Gastrocnemius medialis (tissue), 4 donors: ENCODE measurements at regions of chr2 and their contacts with region 1.

Region 1: DNA sequence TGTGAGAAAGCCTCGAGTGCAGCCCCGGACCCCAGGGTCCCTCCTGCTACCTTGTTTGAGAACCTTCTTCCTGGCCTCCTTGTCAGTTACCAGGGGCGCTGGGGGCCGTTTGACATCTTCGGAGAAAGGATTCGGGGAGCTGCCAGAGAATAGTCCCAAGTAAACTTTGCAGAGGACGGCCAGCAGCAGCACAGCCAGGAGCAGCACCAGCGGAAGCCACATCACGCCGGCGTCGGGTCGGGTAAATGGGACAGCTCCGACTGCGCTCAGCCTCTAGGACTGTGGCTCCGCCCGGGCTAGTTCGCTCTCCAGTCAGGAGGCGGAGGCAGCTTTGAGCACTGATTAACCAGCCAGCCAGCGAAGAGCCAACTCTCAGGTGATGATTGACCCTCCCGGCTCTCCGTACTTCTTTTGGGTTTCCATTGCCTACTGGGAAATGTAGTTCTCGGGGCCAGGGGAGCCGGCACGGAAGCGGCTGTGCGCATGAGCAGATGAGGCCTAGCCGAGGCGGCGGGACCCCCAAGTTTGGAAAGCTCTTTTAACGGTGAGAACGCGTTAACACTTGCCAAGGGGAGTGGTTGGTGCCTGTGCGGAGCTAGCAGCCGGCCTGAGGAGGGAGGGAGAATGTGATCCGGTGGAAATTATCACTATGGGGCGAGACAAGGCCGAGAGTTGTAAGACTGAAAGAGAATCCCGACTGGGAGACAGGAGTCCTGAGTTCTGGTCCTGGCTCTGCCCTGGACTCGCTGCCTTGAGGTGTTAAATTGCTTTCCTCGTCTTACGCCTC is at the starts of genes ELMOD3 and RETSAT:
- DNase-seq: peak; percentile 99
- ATAC-seq: peak; percentile 90 to 94
- H3K4me3 ChIP-seq: peak within 1 kb of the TSS; percentile 70 to 97 (median 83)
- H3K27ac ChIP-seq: peak within 1 kb of the TSS; percentile 93 to 96 (median 96)
- H3K4me1 ChIP-seq: peaks cover 39 to 44% of the 10 kb centered on the region in 2 donors
- H3K27me3 ChIP-seq: no peaks in the 10 kb centered on the region
- CTCF ChIP-seq: no peak
- POLR2A ChIP-seq: peak; percentile 97
- total RNA-seq, gene ELMOD3: 15.9 to 31.7 (median 25.0) TPM
- total RNA-seq, gene RETSAT: 62.2 to 151 (median 116) TPM

Region 2: DNA sequence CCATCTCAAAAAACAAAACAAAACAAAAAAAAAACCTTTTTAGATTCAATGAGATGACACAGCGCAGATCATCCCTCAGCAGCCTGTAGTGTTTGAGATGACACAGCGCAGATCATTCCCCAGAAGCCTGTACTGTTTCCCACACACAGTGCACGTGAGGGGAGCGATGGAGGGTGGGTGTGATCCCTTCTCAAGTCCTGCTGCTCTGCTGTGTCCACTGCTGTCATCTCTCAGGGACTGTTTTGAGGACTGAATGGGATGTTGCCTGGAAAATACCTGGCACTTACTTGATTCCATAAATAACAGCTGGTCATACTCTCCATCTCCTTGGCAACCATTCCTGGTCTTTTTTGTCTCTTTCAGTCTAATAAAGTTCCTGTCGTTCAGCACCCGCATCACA is 52.4 kb before region 1 on chr2:
- in situ Hi-C with region 1: no loop called
- intact Hi-C with region 1: no loop called
- DNase-seq: no peak
- ATAC-seq: no peak
- H3K4me3 ChIP-seq: no peak overlapping the region
- H3K27ac ChIP-seq: no peak overlapping the region
- H3K4me1 ChIP-seq: peaks cover 4 to 6% of the 10 kb centered on the region in 2 donors
- H3K27me3 ChIP-seq: no peaks in the 10 kb centered on the region
- CTCF ChIP-seq: no peak
- POLR2A ChIP-seq: no peak

Region 3: GRCh38 chr2:85327822-85328617 is 26.5 kb before region 1 on chr2 and contains the start of gene TGOLN2:
- in situ Hi-C with region 1: no loop called
- intact Hi-C with region 1: loop called (anchors 1 kb)
- DNase-seq: peak; percentile 80 to 87
- ATAC-seq: peak; percentile 96
- H3K4me3 ChIP-seq: peak within 1 kb of the TSS; percentile 74 to 99 (median 81)
- H3K27ac ChIP-seq: peak within 1 kb of the TSS; percentile 90 to 98 (median 94)
- H3K4me1 ChIP-seq: peaks cover 32 to 34% of the 10 kb centered on the region in 2 donors
- H3K27me3 ChIP-seq: no peaks in the 10 kb centered on the region
- CTCF ChIP-seq: peak in 2 of 5 experiments; percentile 21 to 25
- POLR2A ChIP-seq: peak; percentile 96 to 99
- total RNA-seq, gene TGOLN2: 29.5 to 81.7 (median 61.9) TPM

Region 4: GRCh38 chr2:85383850-85384249 is 29.4 kb after region 1 on chr2:
- in situ Hi-C with region 1: no loop called
- intact Hi-C with region 1: loop called (anchors 2 kb)
- DNase-seq: no peak
- ATAC-seq: no peak
- H3K4me3 ChIP-seq: no peak overlapping the region
- H3K27ac ChIP-seq: peak overlapping the region; percentile 71 to 83 (median 77)
- H3K4me1 ChIP-seq: peaks cover 3 to 12% of the 10 kb centered on the region in 2 donors
- H3K27me3 ChIP-seq: no peaks in the 10 kb centered on the region
- CTCF ChIP-seq: no peak
- POLR2A ChIP-seq: no peak

Region 5: DNA sequence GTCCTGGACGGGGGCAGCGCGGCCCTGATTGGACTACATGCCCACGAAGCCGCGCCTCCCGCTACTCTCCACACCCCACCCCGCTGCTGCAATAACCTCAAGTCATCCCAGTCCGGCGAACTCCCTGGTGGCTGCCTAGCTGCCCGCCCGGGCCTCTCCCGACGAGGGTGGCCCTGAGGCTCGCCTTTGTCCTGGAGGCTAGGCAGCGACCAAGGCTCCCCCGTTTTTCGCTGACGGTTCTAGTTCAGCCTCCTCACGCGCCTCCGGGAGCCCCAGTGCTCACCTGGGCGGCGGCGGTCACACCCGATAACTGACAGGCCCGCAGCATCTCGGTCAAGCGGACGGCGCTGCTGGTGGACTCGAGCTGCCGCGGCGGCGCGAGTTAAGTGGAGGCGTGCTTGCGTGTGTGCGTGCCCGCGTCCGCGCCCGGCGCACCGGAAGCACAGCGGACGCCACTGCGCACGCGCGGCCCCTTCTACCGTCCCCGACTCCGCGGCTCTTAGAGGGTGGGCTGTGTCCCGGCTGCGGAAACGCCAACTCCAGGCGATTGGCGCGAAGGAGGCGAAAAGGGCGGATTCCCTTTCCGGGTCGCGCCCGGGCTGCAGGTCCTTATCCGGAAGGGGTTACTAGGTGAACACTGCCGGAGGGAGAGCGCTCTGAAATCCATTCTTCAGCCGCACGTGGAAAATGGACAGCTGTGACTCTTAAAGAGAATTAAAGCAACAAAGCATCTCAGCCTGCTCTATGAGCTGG is 840.8 kb after region 1 on chr2 and contains the start of gene IMMT:
- in situ Hi-C with region 1: loop called in 1 of 4 experiments (anchors 25 kb)
- intact Hi-C with region 1: no loop called
- DNase-seq: peak; percentile 93 to 95
- ATAC-seq: peak; percentile 79 to 85
- H3K4me3 ChIP-seq: peak within 1 kb of the TSS; percentile 80 to 99 (median 88)
- H3K27ac ChIP-seq: peak within 1 kb of the TSS; percentile 95 to 100 (median 98)
- H3K4me1 ChIP-seq: peaks cover 51 to 54% of the 10 kb centered on the region in 2 donors
- H3K27me3 ChIP-seq: no peaks in the 10 kb centered on the region
- CTCF ChIP-seq: peak in 3 of 5 experiments; percentile 1 to 31 (median 21)
- POLR2A ChIP-seq: peak; percentile 90 to 93
- total RNA-seq, gene IMMT: 83.5 to 153 (median 127) TPM